ENCODE measurements at regions of chr19 and their contacts with region 1.

Region 1: GRCh38 chr19:31054430-31054829 is 294.8 kb downstream of the TSHZ3 start:
- DNase-seq: peak; percentile 47
- ATAC-seq: peak; percentile 47
- H3K4me3 Mint-ChIP-seq: no peak overlapping the region
- H3K27ac Mint-ChIP-seq: no peak overlapping the region
- H3K4me1 Mint-ChIP-seq: no peaks in the 10 kb centered on the region
- H3K27me3 Mint-ChIP-seq: peaks cover 16% of the 10 kb centered on the region
- CTCF ChIP-seq: no peak

Region 2: DNA sequence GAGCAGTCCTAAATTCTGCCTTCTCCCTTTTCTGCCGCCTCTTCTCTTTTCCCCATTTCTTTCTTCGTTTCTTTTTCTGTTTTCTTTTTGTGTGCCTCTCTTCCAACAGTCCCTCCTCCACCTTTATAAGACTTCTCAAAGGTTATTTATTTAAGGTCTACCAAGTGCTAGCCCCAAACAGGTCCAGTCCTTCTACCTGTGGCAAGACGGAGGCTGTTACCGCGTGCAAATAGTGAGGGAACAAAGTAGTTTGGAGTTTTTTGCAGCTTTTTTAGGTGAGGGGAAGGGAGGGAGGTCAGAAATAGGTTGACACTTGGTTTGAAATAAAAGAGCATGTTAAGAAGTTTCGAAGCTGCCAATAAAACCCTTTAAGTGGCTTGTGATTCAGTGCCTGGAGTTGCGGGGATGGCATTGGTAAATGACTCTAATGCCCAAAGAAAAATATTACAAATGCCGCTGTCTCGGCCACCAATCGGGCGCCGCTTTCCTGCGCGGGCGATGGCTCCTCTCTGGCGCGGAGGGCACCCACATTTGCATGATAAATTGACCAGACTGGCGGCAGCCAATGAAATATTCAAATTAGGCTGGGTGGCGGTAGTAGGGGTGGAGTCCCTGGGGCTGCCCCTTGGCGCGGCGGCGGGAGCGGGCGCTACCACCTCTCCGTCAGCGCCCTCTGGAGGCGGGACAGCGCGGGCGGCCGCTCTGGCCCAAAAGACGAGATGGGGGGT is 302.3 kb after region 1 on chr19:
- CTCF ChIA-PET with region 1: interaction called, 3 read pairs
- POLR2A ChIA-PET with region 1: no interaction called
- intact Hi-C with region 1: loop called (anchors 5 kb)
- DNase-seq: peak; percentile 77
- ATAC-seq: peak; percentile 91
- H3K4me3 Mint-ChIP-seq: no peak overlapping the region
- H3K27ac Mint-ChIP-seq: no peak overlapping the region
- H3K4me1 Mint-ChIP-seq: peaks cover 33% of the 10 kb centered on the region
- H3K27me3 Mint-ChIP-seq: peaks cover 81% of the 10 kb centered on the region
- CTCF ChIP-seq: peak; percentile 65

Measured in activated CD8-positive, alpha-beta T cell treated with anti-CD3 and anti-CD28 coated beads for 36 hours (primary cell).